ENCODE measurements at regions of chr1 and their contacts with region 1.

Region 1: GRCh38 chr1:37859507-37860345 is at the start of gene MTF1:
- DNase-seq: peak; percentile 98
- H3K4me3 Mint-ChIP-seq: peak within 1 kb of the TSS; percentile 92
- H3K27ac Mint-ChIP-seq: peak within 1 kb of the TSS; percentile 84
- H3K4me1 Mint-ChIP-seq: peaks cover 39% of the 10 kb centered on the region
- H3K27me3 Mint-ChIP-seq: no peaks in the 10 kb centered on the region
- total RNA-seq, gene MTF1: 18.9 to 19.1 TPM

Region 2: DNA sequence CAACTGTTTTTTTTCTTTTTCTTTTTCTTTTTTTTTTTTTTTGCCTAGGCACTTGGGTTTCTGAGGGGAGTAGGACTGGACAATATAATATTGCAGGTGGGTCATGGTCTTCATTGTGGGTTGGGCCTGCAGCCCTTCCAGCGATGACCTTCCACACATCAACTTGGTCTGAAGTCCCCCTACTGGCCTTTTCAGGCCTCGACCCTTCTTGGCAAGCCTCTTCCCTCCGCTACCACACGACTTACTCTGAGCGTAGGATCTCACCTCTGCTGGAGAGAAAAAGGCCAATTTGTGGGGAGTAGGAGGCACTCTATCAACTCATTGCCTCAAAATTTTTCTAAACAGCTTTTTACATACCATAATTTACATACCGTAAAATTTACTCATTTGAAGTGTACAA is 774.3 kb before region 1 on chr1:
- CTCF ChIA-PET with region 1: no interaction called
- intact Hi-C with region 1: no loop called
- DNase-seq: no peak
- H3K4me3 Mint-ChIP-seq: no peak overlapping the region
- H3K27ac Mint-ChIP-seq: no peak overlapping the region
- H3K4me1 Mint-ChIP-seq: no peaks in the 10 kb centered on the region
- H3K27me3 Mint-ChIP-seq: peaks cover 2% of the 10 kb centered on the region

Region 3: GRCh38 chr1:37514350-37515184 is 345.2 kb before region 1 on chr1 and contains the start of gene MEAF6:
- CTCF ChIA-PET with region 1: no interaction called
- intact Hi-C with region 1: loop called (anchors 1 kb)
- DNase-seq: peak; percentile 81
- H3K4me3 Mint-ChIP-seq: peak within 1 kb of the TSS; percentile 91
- H3K27ac Mint-ChIP-seq: peak within 1 kb of the TSS; percentile 95
- H3K4me1 Mint-ChIP-seq: peaks cover 40% of the 10 kb centered on the region
- H3K27me3 Mint-ChIP-seq: no peaks in the 10 kb centered on the region
- total RNA-seq, gene MEAF6: 57.5 to 62.8 TPM

Region 4: DNA sequence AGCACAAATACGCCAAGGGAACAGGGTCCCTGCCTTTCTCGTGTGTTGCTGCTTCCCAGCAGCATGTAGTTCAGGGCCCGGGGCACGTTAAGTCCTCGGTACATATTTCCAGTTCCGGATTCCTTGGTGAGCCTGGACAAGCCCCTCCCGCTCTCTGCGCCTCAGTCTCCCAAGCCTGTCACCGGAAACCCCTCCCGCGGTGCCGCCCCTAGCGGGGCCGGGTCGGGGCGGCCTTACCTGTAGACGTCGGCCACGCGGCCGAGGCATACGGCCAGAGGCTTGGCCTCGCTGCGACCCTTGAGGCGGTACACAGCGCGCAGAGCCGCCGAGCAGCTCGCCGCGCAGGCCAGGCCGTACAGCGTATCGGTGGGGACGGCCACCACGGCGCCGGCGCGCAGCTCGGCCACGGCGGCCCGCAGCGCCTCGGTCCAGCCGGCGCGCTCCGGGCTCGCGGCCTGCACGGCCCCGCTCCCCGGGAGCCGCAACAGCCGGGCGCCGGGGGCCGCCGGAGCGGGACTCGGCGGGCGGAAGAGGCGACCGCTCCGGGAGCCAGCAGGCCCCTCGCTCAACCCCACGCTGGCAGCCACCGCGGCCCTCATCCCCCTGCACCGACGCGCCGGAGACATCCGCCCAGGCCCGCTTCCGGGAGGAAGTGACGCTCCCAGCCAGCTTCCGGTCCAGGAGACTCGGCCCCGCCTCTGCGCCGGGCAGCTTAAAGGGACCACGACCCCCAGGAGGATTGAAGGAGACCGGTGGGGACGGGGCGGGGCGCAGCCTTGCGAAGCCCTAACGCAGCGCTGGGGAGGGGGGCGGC is 52.0 kb before region 1 on chr1 and contains the starts of genes C1orf122 and YRDC:
- CTCF ChIA-PET with region 1: interaction called, 18 read pairs
- intact Hi-C with region 1: loop called (anchors 1 kb)
- DNase-seq: peak; percentile 92
- H3K4me3 Mint-ChIP-seq: peak within 1 kb of the TSS; percentile 95
- H3K27ac Mint-ChIP-seq: peak within 1 kb of the TSS; percentile 93
- H3K4me1 Mint-ChIP-seq: peaks cover 40% of the 10 kb centered on the region
- H3K27me3 Mint-ChIP-seq: no peaks in the 10 kb centered on the region
- total RNA-seq, gene C1orf122: 12.8 to 14.2 TPM
- total RNA-seq, gene YRDC: 31.6 to 31.7 TPM

Region 5: GRCh38 chr1:37846647-37847339 is 12.9 kb before region 1 on chr1:
- CTCF ChIA-PET with region 1: interaction called, 24 read pairs
- intact Hi-C with region 1: no loop called
- DNase-seq: peak; percentile 27
- H3K4me3 Mint-ChIP-seq: peak overlapping the region; percentile 39
- H3K27ac Mint-ChIP-seq: peak overlapping the region; percentile 50
- H3K4me1 Mint-ChIP-seq: peaks cover 38% of the 10 kb centered on the region
- H3K27me3 Mint-ChIP-seq: no peaks in the 10 kb centered on the region

Region 6: DNA sequence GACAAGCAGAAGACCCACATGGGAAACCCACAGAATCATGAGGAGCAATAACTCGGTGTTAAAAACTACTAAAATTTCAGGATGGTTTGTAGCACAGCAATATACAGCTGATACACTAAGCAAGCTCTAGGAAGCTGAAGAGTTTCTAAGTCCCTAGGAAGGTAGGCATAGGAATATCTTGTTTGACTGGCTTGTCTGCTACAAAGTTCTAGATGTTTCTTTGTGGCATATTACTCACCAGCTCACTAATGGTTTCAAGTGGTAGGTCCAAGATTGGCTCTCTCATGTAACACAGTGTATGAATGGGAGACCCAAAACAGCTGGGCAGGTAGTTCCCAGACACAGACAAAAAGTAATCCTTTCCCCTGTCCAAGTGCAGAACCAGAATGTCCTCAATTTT is 13.0 kb after region 1 on chr1:
- CTCF ChIA-PET with region 1: interaction called, 10 read pairs
- intact Hi-C with region 1: no loop called
- DNase-seq: no peak
- H3K4me3 Mint-ChIP-seq: no peak overlapping the region
- H3K27ac Mint-ChIP-seq: no peak overlapping the region
- H3K4me1 Mint-ChIP-seq: no peaks in the 10 kb centered on the region
- H3K27me3 Mint-ChIP-seq: no peaks in the 10 kb centered on the region

Measured in activated naive CD4-positive, alpha-beta T cell treated with anti-CD3 and anti-CD28 coated beads for 36 hours (primary cell).